ENCODE measurements at regions of chr6 and their contacts with region 1.

Region 1: DNA sequence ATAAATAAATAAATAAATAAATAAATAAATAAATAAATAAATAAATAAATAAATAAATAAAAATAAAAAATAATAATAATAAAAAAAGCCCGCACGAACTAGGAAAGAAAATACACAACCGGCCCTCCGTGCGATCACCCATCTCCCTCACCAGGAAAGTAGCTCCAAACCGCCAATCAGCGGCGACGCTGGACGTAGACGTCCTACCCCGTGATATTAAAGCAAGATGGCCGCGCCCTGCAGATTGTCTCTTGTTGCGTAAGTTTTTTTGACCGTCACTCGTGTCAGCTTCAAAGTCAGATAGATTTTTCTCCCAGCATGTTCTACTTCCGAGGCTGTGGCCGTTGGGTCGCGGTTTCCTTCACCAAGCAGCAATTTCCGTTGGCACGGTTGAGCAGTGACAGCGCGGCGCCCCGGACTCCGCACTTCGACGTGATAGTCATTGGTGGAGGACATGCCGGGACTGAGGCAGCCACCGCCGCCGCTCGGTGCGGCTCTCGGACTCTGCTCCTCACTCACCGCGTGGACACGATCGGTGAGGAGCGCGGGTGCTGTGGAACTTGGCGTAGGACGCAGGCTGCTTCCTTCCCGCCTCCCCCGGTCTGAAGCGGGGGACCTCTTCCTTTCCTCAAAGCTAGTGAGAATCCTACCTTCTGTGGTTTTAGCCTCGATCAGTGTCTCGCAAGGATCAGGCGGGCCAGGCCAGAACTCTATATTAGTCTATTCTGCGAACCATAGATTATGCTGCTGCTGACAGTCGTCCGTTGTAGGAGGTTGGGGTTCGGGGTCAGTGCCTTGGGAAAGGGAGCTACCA is at the start of gene MTO1:
- DNase-seq: peak; percentile 78 to 84
- H3K4me3 ChIP-seq: peak within 1 kb of the TSS; percentile 89
- H3K27ac ChIP-seq: peak within 1 kb of the TSS; percentile 93
- H3K4me1 ChIP-seq: peaks cover 11% of the 10 kb centered on the region
- H3K27me3 ChIP-seq: no peaks in the 10 kb centered on the region
- CTCF ChIP-seq: no peak
- total RNA-seq, gene MTO1: 27.2 and 29.3 TPM in 2 replicates

Region 2: GRCh38 chr6:73109659-73110058 is 352.1 kb before region 1 on chr6:
- CTCF ChIA-PET with region 1: no interaction called
- POLR2A ChIA-PET with region 1: no interaction called
- intact Hi-C with region 1: no loop called
- DNase-seq: no peak
- H3K4me3 ChIP-seq: no peak overlapping the region
- H3K27ac ChIP-seq: no peak overlapping the region
- H3K4me1 ChIP-seq: no peaks in the 10 kb centered on the region
- H3K27me3 ChIP-seq: no peaks in the 10 kb centered on the region
- CTCF ChIP-seq: no peak

Region 3: DNA sequence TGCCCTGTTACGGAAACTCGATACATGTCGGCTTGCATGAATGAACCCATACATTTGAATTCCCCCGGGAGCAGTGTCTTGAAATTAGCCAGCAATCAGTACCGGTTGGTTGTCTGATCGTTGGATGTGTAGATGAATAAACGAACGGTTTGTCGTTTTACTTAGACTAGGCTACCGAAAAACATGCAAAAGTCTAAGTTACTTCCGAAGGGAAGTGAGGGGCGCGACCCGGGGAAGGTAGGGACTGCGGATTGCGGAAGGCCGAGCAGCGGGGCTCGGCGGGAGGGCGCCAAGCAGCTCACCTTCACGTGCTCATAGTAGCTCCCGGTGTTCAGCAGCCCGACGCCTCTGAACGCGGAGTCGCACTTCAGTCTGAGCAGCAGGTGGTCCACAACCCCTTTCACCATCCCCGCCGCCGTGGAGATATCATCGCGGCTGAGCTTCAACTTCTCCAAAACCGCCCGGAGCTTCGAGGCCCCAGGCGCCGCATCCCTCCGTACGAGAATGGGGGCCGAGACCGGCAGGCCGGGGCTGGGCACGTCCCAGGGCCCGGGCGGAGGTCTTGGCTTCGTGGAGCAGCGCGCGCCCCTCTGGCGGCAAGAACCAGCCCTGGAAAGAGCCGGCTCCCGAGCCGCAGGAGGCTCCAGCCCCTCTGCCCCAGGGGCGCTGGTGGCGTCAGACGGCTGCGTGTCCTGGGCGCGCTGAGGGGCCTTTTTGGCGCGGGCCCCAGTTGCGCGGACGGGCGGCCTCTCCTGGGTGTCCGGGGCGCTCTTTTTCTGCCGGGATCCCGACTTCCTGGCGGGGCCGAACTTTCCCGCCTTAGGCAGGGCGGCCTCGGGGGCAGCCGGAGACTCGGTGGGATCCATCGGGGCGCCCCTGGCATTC is 10.3 kb before region 1 on chr6:
- CTCF ChIA-PET with region 1: no interaction called
- POLR2A ChIA-PET with region 1: interaction called, 18 read pairs
- intact Hi-C with region 1: no loop called
- DNase-seq: peak; percentile 38 to 43
- H3K4me3 ChIP-seq: peak overlapping the region; percentile 92
- H3K27ac ChIP-seq: peak overlapping the region; percentile 74
- H3K4me1 ChIP-seq: peaks cover 27% of the 10 kb centered on the region
- H3K27me3 ChIP-seq: no peaks in the 10 kb centered on the region
- CTCF ChIP-seq: no peak

Region 4: DNA sequence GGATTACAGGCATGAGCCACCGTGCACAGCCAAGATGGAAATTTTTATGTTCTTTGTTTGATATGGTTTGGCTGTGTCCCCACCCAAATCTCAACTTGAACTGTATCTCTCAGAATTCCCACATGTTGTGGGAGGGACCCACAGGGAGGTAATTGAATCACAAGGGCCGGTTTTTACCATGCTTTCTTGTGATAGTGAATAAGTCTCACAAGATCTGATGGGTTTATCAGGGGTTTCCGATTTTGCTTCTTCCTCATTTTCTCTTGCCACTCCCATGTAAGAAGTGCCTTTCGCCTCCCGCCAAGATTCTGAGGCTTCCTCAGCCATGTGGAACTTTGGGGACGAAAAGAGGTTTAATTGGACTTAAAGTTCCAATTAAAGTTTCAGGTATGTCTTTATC is 44.5 kb after region 1 on chr6:
- CTCF ChIA-PET with region 1: interaction called, 6 read pairs
- POLR2A ChIA-PET with region 1: no interaction called
- intact Hi-C with region 1: loop called (anchors 5 kb)
- DNase-seq: no peak
- H3K4me3 ChIP-seq: no peak overlapping the region
- H3K27ac ChIP-seq: no peak overlapping the region
- H3K4me1 ChIP-seq: no peaks in the 10 kb centered on the region
- H3K27me3 ChIP-seq: no peaks in the 10 kb centered on the region
- CTCF ChIP-seq: no peak

Region 5: DNA sequence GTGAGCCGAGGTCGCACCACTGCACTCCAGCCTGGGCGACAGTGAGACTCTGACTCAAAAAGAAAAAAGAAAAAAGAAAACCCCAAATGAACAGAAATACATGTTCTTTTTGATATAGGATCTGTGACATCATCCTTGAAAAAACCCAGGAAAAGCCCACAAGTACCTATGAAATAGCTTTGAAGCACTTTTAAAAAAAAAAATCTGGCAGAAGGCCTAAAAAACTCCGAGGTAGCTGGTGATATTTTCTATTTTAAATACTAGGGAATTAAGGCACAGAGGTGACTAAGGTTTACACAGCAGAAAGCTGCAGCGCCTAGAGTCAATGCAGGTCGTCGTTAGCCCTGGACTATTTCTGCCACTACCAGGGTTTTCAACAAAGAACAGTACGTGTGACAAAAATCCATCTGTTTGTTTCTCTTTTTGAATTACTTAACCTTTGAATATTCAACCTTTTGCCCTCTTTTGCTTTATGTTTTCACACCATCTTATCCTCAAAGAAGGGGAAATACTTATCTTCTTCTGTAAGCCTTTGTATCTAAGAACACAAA is 98.5 kb after region 1 on chr6:
- CTCF ChIA-PET with region 1: no interaction called
- POLR2A ChIA-PET with region 1: interaction called, 11 read pairs
- intact Hi-C with region 1: no loop called
- DNase-seq: no peak
- H3K4me3 ChIP-seq: no peak overlapping the region
- H3K27ac ChIP-seq: no peak overlapping the region
- H3K4me1 ChIP-seq: 0 out of 2 replicates have a peak, but pooled peaks cover under 1% of the 10 kb centered on the region
- H3K27me3 ChIP-seq: no peaks in the 10 kb centered on the region
- CTCF ChIP-seq: no peak

Region 6: GRCh38 chr6:75275067-75275466 is 1813.3 kb after region 1 on chr6:
- CTCF ChIA-PET with region 1: no interaction called
- POLR2A ChIA-PET with region 1: interaction called, 11 read pairs
- intact Hi-C with region 1: no loop called
- DNase-seq: peak in 1 of 2 experiments; percentile 78
- H3K4me3 ChIP-seq: no peak overlapping the region
- H3K27ac ChIP-seq: peak overlapping the region; percentile 52
- H3K4me1 ChIP-seq: peaks cover 16% of the 10 kb centered on the region
- H3K27me3 ChIP-seq: no peaks in the 10 kb centered on the region
- CTCF ChIP-seq: no peak

Measured in PC-9 (cell line).